HEK293 (cell line): ENCODE measurements at regions of chr16 and their contacts with region 1.

Region 1: DNA sequence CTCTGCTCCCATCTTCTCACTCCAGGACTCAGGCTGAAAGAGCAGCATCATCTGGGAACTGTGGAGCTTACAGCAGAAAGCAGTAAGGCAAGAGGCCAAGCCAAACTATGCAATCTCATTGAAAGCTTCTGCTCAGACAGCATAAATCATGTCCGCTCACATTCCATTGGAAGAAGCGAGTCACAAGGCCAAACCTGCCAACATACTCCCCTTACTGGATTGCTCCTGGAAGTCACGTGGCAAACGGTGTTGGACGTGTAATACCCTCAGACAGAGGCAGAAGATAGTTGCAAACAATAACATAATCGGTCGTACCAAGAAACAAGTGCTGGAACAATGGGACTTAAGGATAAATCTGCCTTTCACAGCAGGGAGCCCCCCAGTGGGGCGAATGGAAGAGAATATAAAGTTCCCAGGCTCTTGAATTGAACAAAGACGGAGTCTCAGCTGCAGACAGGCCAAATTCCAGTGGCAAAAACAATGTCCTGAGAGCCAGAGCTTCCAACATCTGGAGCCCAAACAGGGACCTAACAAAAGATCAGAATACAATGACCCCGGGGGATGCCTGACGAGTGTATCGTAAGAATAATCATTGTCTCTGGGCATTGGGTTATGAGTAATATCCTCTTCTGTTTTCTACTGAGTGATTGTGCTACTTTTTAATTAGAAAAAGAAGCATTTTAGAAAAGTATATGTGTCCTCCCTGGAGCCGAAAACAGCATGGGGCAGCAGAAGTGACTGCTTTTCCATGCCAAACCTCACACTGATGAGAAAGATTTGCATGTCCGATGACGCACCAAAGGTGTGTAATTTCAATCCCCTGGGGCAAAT is 68.4 kb downstream of the CMC2 start:
- H3K4me3 ChIP-seq: no peak overlapping the region
- H3K27ac ChIP-seq: no peak overlapping the region
- H3K4me1 ChIP-seq: no peaks in the 10 kb centered on the region
- CTCF ChIP-seq: no peak

Region 2: DNA sequence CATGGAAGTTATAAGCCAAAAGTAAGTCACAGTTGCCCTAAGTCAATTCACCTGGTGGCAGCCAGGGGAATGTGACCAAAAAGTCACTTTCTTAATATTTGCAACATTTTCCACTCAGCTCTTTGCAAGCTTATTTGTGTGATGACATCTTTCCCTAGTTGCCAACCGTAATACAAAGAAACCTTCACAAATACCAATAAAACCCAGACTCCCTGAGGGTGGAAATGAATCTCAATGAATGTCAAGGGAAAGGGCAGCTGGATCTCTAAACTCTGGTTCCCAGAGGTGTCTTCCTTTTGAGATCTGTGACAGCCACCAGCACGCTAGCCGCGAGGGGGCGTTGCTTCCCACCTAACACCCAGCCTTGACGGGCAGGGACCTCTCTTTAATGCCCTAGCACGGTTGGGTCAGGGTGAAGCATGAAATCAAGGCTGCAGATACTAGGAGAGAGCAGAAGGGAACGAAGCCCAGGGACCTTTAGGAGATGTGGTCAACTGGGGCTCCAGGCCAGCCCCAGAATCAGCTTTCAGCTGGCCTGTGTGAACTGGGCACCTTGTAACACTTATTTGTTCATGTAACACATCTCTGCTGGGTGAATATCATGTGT is 13.8 kb before region 1 on chr16:
- CTCF ChIA-PET with region 1: interaction called, 13 read pairs
- POLR2A ChIA-PET with region 1: no interaction called
- H3K4me3 ChIP-seq: no peak overlapping the region
- H3K27ac ChIP-seq: no peak overlapping the region
- H3K4me1 ChIP-seq: no peaks in the 10 kb centered on the region
- CTCF ChIP-seq: peak; percentile 73

Region 3: DNA sequence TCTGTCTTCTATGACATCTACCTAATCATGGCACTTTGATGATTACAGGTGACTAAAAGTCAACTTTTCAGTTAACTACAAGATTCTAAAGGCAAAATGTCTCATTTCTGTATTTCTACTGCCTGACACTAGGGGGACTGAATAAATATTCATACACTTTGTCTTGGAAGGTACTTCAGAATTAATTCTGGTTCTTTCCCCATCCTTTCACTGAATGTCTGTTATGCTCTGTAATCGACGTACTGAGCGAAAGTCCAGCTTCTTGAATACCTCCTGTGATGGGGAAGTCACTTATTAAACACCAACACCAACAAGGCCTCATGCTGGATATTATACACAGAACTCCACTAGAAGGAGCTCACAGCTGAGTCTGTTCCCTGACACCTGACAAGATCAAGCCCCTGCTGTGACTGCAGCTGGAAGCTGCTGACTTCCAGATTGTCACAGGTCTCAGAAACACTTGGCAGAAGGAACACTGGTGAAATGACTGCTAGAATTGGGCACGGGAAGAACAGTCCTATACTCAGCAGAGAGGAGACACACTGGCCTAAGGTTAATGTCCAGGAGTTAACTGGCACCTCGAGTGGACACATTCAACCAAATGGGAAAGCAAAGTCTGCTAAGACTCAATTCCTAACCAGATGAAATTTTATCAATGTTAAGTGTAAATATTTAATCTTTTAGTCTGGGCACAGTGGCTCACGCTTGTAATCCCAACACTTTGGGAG is 36.6 kb after region 1 on chr16:
- CTCF ChIA-PET with region 1: no interaction called
- POLR2A ChIA-PET with region 1: no interaction called
- H3K4me3 ChIP-seq: no peak overlapping the region
- H3K27ac ChIP-seq: no peak overlapping the region
- H3K4me1 ChIP-seq: no peaks in the 10 kb centered on the region
- CTCF ChIP-seq: peak; percentile 37